IMR-90 (cell line): ENCODE measurements at regions of chr19 and their contacts with region 1.

Region 1: DNA sequence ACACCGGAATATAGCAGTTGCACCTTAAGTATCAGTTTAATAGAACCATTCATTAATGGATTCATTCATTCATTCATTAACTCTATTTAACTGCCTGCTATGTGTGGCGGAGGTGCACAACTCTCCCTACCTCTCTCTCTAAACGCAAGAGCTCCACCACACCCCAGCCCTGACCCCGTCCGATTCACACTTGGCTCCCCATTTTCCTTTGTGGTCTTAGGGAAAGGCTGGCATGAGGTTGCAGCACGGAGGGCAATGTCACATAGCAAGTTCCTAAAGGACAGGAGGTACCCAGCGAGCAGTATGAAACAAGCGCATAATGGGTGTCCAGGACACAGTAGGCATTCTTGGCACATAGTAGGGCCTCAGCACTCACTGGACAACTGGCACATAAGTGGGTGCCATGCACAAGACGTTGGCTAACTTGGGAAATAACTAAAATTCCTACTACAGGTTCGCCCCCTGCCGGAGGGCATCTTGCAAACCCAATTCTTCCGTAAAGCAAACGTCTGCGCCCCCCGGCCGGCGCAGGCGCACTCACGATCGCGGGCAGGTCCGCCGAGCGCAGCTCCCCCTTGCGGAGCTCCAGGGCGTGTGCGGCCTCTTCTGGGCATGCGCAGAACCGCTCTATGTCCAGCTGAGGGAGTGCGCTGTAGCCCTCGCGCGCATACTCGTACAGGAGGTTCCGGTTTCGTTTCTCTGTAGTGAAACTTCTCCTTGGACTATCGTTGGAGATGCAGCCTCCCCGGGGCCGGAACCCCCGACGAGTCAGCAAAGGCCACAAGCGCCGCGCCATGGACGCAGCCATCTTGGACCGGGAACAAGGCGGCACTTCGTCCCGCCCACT is at the start of gene SARS2:
- DNase-seq: peak; percentile 92
- ATAC-seq: peak; percentile 89
- H3K4me3 ChIP-seq: peak within 1 kb of the TSS; percentile 75
- H3K27ac ChIP-seq: peak within 1 kb of the TSS; percentile 95
- H3K4me1 ChIP-seq: no peaks in the 10 kb centered on the region
- H3K27me3 ChIP-seq: no peaks in the 10 kb centered on the region
- CTCF ChIP-seq: peak; percentile 99
- POLR2A ChIP-seq: peak; percentile 84
- RAD21 ChIP-seq: peak; percentile 71
- total RNA-seq, gene SARS2: 8.3 and 10.8 TPM in 2 replicates

Region 2: GRCh38 chr19:38044267-38045111 is 885.7 kb before region 1 on chr19:
- CTCF ChIA-PET with region 1: no interaction called
- POLR2A ChIA-PET with region 1: no interaction called
- dilution Hi-C with region 1: no loop called
- in situ Hi-C with region 1: no loop called
- intact Hi-C with region 1: no loop called
- DNase-seq: peak; percentile 68
- ATAC-seq: peak; percentile 25; the same call in 1 of the 2 replicates
- H3K4me3 ChIP-seq: no peak overlapping the region
- H3K27ac ChIP-seq: no peak overlapping the region
- H3K4me1 ChIP-seq: no peaks in the 10 kb centered on the region
- H3K27me3 ChIP-seq: no peaks in the 10 kb centered on the region
- CTCF ChIP-seq: peak; percentile 55
- POLR2A ChIP-seq: no peak
- RAD21 ChIP-seq: peak; percentile 71

Region 3: DNA sequence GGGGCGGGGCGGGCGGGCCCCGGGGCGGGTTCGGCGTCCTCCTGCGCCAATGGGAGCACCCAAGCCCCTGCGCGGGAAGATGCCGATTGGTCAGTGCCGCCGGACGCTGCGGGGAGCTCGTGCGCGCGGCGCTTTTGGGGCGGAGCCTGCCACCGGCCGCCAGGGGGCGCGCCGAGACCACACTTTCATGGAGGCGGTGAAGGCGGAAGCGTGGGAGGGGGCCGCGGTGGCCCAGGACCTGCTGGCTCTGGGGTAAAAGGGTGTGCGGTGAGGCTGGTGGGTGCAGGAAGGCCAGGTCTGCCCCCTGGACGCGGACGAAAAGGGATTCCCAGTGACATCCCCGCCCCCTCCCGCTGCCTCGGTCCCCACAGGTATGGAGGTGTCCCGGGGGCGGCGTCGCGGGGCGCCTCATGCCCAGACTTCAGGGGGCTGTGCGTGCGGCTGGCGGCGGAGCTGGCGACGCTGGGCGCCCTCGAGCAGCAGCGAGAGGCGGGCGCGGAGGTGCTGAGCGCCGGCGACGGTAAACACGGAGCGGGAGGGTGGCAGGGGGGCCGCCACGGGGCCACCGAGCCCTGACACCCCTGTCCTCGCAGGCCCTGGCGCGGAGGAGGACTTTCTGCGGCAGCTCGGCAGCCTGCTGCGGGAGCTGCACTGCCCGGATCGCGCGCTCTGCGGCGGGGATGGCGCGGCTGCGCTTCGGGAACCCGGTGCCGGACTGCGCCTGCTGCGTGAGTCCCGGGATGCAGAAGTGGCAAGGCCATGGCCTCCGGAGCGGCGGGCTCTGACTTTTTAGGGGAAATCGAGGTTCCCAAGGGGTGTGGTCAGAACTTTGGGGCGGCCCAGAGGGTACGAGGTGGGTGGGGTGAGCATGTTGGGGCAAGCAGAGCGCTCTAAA is 526.9 kb before region 1 on chr19 and contains the start of gene FAM98C:
- CTCF ChIA-PET with region 1: interaction called, 9 read pairs
- POLR2A ChIA-PET with region 1: no interaction called
- dilution Hi-C with region 1: no loop called
- in situ Hi-C with region 1: loop called (anchors 25 kb)
- intact Hi-C with region 1: no loop called
- DNase-seq: peak; percentile 92
- ATAC-seq: peak; percentile 98
- H3K4me3 ChIP-seq: peak within 1 kb of the TSS; percentile 79
- H3K27ac ChIP-seq: peak within 1 kb of the TSS; percentile 69
- H3K4me1 ChIP-seq: no peaks in the 10 kb centered on the region
- H3K27me3 ChIP-seq: no peaks in the 10 kb centered on the region
- CTCF ChIP-seq: peak; percentile 98
- POLR2A ChIP-seq: peak; percentile 53; the same call in 1 of the 2 replicates
- RAD21 ChIP-seq: peak; percentile 78
- total RNA-seq, gene FAM98C: 3.6 and 4.2 TPM in 2 replicates

Region 4: DNA sequence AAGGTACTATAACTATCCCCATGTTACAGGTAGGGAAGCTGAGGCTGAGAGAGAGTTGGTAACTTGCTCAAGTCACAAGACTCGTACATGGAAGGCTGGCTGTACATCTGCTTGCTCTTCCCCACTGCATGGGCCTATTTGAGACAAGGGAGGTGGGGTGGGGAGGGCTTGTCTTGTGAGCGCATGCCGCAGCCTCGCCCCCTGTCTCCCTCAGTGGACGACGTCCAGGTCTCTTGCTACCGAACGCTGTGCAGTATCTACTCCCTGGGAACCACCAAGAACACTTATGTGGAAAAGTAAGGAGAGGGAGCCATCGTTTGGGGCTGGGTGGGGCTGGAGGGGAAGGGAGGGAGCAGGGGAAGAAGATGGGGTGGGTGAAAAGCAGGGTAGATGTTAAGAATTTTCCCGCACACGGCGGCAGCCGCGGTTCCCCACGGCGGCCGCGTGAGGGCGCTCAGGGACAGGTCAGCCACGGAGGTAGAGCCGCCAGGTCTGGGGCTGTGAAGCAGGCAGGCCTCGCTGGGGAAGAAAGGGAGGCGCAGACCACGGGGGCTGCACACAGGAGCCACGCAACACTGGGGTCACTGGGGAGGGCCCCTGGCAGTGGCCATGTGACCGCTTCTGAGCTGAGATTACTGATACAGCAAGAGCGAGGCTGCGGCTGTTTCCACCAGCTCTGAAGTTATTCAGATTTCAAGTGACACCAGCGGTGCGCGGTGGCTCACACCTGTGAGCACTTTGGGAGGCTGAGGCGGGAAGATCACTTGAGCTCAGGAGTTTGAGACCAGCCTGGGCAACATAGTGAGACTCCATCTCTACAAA is 415.1 kb before region 1 on chr19:
- CTCF ChIA-PET with region 1: no interaction called
- POLR2A ChIA-PET with region 1: no interaction called
- dilution Hi-C with region 1: no loop called
- in situ Hi-C with region 1: no loop called
- intact Hi-C with region 1: loop called (anchors 1 kb)
- DNase-seq: peak; percentile 37
- ATAC-seq: peak; percentile 99
- H3K4me3 ChIP-seq: no peak overlapping the region
- H3K27ac ChIP-seq: no peak overlapping the region
- H3K4me1 ChIP-seq: no peaks in the 10 kb centered on the region
- H3K27me3 ChIP-seq: peaks cover 15% of the 10 kb centered on the region
- CTCF ChIP-seq: peak; percentile 83
- POLR2A ChIP-seq: no peak
- RAD21 ChIP-seq: peak; percentile 90

Region 5: DNA sequence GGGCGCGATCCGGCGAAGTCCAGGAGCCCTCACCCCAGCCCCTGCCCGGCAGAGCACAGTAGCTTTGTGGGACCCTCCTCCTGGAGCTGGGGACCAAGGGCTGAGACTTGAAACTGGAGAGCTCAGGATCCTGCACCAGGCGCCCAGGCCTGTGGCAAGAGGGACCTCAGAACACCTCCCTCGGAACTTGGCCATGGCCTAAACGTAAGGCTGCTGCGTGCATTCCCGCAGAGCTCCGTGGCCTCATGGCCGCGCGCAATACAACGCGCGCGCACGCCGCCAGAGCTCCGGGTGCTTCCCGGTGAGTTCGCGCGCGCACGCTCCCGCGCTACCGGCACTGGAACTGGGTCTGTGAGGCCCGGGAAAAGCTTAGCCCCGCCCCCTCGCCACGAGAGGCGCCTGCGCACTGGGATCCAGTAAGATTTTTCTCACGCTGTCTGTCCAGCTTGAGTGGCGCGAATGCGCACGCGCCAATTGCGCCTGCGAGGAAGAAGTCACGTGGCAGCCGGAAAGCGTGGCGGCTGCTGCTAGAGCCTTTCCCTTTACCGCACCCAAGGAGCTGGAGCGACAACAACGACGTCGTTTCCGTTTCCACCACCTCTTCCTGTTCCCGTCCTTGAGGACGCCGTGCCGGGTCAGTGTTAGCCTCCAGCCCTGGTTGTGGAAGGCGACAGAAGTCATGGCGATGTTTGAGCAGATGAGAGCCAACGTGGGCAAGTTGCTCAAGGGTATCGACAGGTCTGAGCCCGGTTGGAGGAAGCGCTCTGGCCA is 311.4 kb before region 1 on chr19 and contains the start of gene EIF3K:
- CTCF ChIA-PET with region 1: no interaction called
- POLR2A ChIA-PET with region 1: no interaction called
- dilution Hi-C with region 1: no loop called
- in situ Hi-C with region 1: loop called (anchors 10 kb)
- intact Hi-C with region 1: no loop called
- DNase-seq: peak; percentile 99
- ATAC-seq: peak; percentile 97
- H3K4me3 ChIP-seq: peak within 1 kb of the TSS; percentile 63
- H3K27ac ChIP-seq: peak within 1 kb of the TSS; percentile 78
- H3K4me1 ChIP-seq: peaks cover 6% of the 10 kb centered on the region; the same call in 1 of the 2 replicates
- H3K27me3 ChIP-seq: no peaks in the 10 kb centered on the region
- CTCF ChIP-seq: no peak
- POLR2A ChIP-seq: peak; percentile 81
- RAD21 ChIP-seq: no peak
- total RNA-seq, gene EIF3K: 965 and 1,137 TPM in 2 replicates

Region 6: DNA sequence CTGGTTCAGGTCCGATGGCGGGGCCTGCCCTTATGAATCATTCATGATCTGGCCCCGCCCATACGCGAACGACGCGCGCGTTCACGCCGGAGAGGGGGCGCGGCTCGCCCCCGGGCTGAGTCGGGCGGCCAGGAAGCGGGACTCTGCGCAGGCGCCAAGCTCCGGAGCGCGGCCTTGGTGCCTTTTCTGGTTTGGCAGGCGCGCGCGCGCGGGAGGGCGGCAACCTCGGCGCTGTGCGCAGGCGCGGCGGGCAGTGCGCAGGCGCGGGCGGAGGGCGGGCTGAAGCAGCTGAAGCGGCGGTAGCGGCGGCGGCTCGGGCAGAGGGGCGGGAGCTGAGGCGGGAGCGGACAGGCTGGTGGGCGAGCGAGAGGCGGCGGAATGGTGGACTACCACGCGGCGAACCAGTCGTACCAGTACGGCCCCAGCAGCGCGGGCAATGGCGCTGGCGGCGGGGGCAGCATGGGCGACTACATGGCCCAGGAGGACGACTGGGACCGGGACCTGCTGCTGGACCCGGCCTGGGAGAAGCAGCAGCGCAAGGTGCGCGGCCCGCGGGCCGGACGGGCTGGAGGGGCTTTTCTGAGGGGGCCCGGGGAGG is 282.7 kb before region 1 on chr19 and contains the start of gene ACTN4:
- CTCF ChIA-PET with region 1: no interaction called
- POLR2A ChIA-PET with region 1: interaction called, 4 read pairs
- dilution Hi-C with region 1: no loop called
- in situ Hi-C with region 1: no loop called
- intact Hi-C with region 1: loop called (anchors 5 kb)
- DNase-seq: peak; percentile 94
- ATAC-seq: peak; percentile 87
- H3K4me3 ChIP-seq: peak within 1 kb of the TSS; percentile 80
- H3K27ac ChIP-seq: peak within 1 kb of the TSS; percentile 91
- H3K4me1 ChIP-seq: peaks cover 21% of the 10 kb centered on the region
- H3K27me3 ChIP-seq: no peaks in the 10 kb centered on the region
- CTCF ChIP-seq: no peak
- POLR2A ChIP-seq: peak; percentile 98
- RAD21 ChIP-seq: peak; percentile 16; the same call in 1 of the 2 replicates
- total RNA-seq, gene ACTN4: 614 and 659 TPM in 2 replicates

Region 7: DNA sequence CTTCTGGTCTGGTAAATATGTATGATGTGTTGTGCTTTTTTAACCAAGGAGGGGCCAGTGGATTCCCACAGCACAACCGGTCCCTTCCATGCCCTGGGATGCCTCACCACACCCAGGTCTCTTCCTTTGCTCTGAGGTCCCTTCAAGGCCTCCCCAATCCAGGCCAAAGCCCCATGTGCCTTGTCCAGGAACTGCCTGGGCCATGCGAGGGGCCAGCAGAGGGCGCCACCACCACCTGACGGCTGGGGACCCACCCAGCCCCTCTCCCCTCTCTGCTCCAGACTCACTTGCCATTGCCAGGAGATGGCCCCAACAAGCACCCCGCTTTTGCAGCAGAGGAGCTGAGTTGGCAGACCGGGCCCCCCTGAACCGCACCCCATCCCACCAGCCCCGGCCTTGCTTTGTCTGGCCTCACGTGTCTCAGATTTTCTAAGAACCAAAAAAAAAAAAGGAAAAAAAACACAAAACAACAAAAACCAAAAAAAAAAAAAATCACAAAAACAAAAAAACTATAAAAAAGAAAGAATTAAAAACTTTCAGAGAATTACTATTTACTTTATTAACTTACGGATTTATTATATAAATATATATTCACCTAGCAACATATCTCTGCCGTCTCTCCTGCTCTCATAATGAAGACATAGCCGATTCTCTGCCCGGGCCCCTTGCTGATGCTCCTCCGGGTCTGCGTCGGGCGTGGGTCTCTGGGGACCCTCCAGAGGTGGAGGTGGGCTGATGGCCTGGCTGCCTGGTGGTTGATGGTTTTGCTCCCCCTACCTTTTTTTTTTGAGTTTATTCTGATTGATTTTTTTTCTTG is 200.3 kb before region 1 on chr19:
- CTCF ChIA-PET with region 1: no interaction called
- POLR2A ChIA-PET with region 1: no interaction called
- dilution Hi-C with region 1: no loop called
- in situ Hi-C with region 1: no loop called
- intact Hi-C with region 1: loop called (anchors 2 kb)
- DNase-seq: peak; percentile 44
- ATAC-seq: peak; percentile 60
- H3K4me3 ChIP-seq: no peak overlapping the region
- H3K27ac ChIP-seq: no peak overlapping the region
- H3K4me1 ChIP-seq: peaks cover 12% of the 10 kb centered on the region
- H3K27me3 ChIP-seq: no peaks in the 10 kb centered on the region
- CTCF ChIP-seq: peak; percentile 79
- POLR2A ChIP-seq: no peak
- RAD21 ChIP-seq: peak; percentile 65

Region 8: DNA sequence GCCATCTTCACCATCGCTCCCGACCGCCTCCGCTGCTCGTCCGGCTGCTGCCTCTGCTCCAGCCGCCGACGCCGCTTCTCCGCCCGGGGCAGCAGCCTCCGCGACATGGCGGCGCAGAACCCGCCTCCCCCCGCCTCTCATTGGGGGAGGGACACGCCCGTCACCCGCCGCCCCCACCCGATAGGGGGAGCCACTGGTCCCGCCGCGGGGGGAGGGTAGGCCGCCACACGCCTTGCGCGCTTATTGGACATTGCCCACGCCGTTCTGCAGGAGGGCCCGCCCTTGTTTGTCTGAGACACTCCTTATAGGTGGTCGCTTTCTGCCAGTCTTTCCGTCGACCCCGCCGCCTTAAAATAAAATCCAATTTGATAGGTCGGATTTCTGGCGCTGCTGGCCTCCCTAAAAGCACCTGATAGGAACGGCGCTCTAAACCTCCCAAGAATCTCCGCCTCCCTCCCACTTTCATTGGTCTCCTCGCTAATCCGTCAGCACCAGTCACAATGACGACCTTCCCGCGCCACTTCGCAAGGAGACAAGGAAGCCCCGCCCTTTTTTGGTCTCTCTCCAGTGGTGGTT is 80.2 kb before region 1 on chr19 and contains the start of gene HNRNPL:
- CTCF ChIA-PET with region 1: no interaction called
- POLR2A ChIA-PET with region 1: no interaction called
- dilution Hi-C with region 1: no loop called
- in situ Hi-C with region 1: no loop called
- intact Hi-C with region 1: loop called (anchors 1 kb)
- DNase-seq: peak; percentile 100
- ATAC-seq: peak; percentile 73
- H3K4me3 ChIP-seq: peak within 1 kb of the TSS; percentile 54
- H3K27ac ChIP-seq: peak within 1 kb of the TSS; percentile 72
- H3K4me1 ChIP-seq: peaks cover 15% of the 10 kb centered on the region
- H3K27me3 ChIP-seq: no peaks in the 10 kb centered on the region
- CTCF ChIP-seq: peak; percentile 64
- POLR2A ChIP-seq: peak; percentile 96
- RAD21 ChIP-seq: no peak
- total RNA-seq, gene HNRNPL: 316 and 429 TPM in 2 replicates

Region 9: DNA sequence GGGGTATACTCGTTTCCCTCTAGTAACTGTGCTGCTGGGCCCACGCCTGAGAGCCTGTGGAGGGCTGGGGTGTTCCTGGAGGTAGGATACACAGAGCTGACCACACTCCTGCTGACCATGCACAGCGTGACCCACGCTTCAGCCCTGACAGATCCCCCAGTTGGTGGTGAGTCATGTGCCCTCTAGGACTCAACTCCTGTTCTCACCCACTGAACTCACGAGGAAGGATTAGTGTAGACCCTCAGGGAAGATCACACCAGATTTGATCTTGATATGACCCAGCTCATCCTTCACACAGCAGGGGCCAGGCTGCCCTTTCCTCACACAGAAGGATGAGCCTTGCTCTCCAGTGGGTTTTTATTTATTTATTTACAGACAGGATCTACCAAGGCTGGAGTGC is 140.7 kb after region 1 on chr19:
- CTCF ChIA-PET with region 1: no interaction called
- POLR2A ChIA-PET with region 1: no interaction called
- dilution Hi-C with region 1: no loop called
- in situ Hi-C with region 1: no loop called
- intact Hi-C with region 1: no loop called
- DNase-seq: peak; percentile 32
- ATAC-seq: peak; percentile 40; the same call in 1 of the 2 replicates
- H3K4me3 ChIP-seq: no peak overlapping the region
- H3K27ac ChIP-seq: no peak overlapping the region
- H3K4me1 ChIP-seq: peaks cover 2% of the 10 kb centered on the region; the same call in 1 of the 2 replicates
- H3K27me3 ChIP-seq: no peaks in the 10 kb centered on the region; the same call in 1 of the 2 replicates
- CTCF ChIP-seq: no peak
- POLR2A ChIP-seq: no peak
- RAD21 ChIP-seq: no peak